Ascending aorta (tissue), 2 donors: ENCODE measurements at regions of chr11 and their contacts with region 1.

Region 1: GRCh38 chr11:86577663-86578636 is 94.5 kb downstream of the ME3 start:
- DNase-seq: peak in 1 of 2 donors; percentile 85
- H3K4me3 ChIP-seq: peak overlapping the region; percentile 3 to 32
- H3K27ac ChIP-seq: peak overlapping the region; percentile 58 to 80
- H3K4me1 ChIP-seq: peaks cover 6 to 23% of the 10 kb centered on the region in 2 donors
- H3K27me3 ChIP-seq: no peaks in the 10 kb centered on the region
- CTCF ChIP-seq: no peak

Region 2: GRCh38 chr11:86483940-86484794 is 93.8 kb before region 1 on chr11:
- intact Hi-C with region 1: loop called (anchors 2 kb)
- DNase-seq: peak; percentile 42 to 92
- H3K4me3 ChIP-seq: no peak overlapping the region
- H3K27ac ChIP-seq: peak overlapping the region; percentile 67 to 85
- H3K4me1 ChIP-seq: peaks cover 4 to 16% of the 10 kb centered on the region in 2 donors
- H3K27me3 ChIP-seq: no peaks in the 10 kb centered on the region
- CTCF ChIP-seq: no peak

Region 3: DNA sequence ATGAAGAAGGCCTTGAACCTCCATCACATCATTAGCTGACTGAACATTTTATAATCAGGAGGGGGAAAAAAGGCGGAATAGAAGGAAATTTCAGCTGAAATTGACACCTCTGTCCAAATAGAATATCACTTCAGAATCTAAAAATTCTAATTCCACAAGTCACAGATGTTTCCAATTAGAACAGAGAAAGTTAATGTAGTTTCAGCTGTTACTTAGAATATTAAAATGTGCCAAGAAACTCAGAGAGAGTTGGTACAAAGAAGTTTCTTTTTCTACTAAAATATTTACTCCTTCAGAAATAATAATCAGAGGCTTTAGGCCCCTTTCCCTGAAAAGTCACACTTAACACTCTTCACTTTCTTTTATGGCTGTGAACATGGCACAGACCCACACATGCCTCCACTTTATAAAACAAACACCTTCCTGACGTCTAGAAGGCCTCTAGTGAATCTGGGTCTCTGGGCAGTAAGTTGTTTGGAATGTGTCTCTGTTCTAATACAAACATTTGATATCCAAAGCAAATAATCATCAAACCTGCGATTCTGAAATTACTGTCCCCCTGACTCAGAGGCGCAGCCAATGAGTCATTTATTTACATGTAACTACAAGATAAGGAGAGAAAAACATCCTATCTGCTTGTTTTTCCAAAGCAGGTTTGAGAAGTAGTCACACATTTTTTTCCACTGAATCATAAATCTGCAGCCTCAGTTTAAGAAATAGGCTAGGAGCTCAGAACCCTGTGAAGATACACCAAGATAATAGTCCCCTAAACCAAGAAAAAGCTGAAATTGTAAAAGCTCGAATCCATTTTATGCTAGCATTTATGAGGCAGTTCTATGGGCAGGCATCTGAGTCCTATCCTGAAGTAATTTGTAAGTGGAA is 54.0 kb before region 1 on chr11:
- intact Hi-C with region 1: loop called (anchors 1 kb)
- DNase-seq: peak in 1 of 2 donors; percentile 75
- H3K4me3 ChIP-seq: no peak overlapping the region
- H3K27ac ChIP-seq: peak overlapping the region; percentile 66 to 79
- H3K4me1 ChIP-seq: peaks cover 8 to 34% of the 10 kb centered on the region in 2 donors
- H3K27me3 ChIP-seq: no peaks in the 10 kb centered on the region
- CTCF ChIP-seq: no peak

Region 4: DNA sequence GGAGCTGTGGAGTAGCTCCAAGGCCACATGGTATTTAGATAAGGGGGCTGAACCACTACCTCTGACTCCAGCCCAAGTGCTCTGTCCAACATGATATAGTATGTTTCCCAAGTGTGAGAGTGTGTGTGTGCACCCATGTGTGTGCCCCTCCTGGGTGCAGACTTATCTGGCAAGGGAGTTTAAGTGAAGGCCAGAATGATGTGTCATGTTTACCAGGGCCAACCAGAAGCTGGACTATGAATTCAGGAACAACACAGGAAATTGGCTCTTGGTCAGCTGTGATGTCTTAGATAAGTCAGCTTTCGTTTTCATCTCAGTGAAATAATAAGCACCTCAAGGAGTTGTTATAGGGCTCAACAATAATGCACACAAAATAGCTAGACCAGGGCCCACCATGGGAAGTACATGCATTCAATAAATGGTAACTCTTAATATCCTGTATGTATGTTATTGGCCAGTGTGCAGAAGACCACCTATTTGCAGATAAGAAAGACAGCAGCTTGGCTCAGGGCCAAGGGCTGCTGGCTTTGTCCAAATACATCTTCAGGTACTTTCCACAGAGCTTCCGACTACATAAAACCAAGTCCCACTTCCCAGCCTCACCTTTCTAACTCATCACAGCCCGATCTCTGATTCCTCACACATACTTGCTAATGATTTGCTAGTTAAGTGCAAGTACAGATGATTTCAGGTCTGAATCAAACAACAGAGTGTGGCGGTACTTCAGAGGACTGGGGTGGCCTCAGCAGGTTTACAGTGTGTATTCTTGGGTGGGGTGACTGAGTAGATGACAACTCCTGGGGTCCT is 26.5 kb before region 1 on chr11:
- intact Hi-C with region 1: loop called (anchors 2 kb)
- DNase-seq: peak in 1 of 2 donors; percentile 77
- H3K4me3 ChIP-seq: no peak overlapping the region
- H3K27ac ChIP-seq: peak overlapping the region; percentile 63 to 78
- H3K4me1 ChIP-seq: peaks cover 5 to 35% of the 10 kb centered on the region in 2 donors
- H3K27me3 ChIP-seq: no peaks in the 10 kb centered on the region
- CTCF ChIP-seq: no peak